ENCODE measurements at regions of chr1 and their contacts with region 1.

Region 1: GRCh38 chr1:164456272-164456671 is 102.7 kb upstream of the PBX1 start:
- DNase-seq: no peak
- ATAC-seq: no peak
- H3K4me3 ChIP-seq: no peak overlapping the region
- H3K27ac ChIP-seq: no peak overlapping the region
- H3K4me1 ChIP-seq: no peaks in the 10 kb centered on the region
- H3K27me3 ChIP-seq: no peaks in the 10 kb centered on the region
- CTCF ChIP-seq: no peak
- POLR2A ChIP-seq: no peak
- RAD21 ChIP-seq: no peak

Region 2: GRCh38 chr1:163570071-163570470 is 886.2 kb before region 1 on chr1:
- CTCF ChIA-PET with region 1: no interaction called
- POLR2A ChIA-PET with region 1: no interaction called
- dilution Hi-C with region 1: no loop called
- in situ Hi-C with region 1: no loop called
- intact Hi-C with region 1: no loop called
- DNase-seq: no peak
- ATAC-seq: no peak
- H3K4me3 ChIP-seq: no peak overlapping the region
- H3K27ac ChIP-seq: no peak overlapping the region
- H3K4me1 ChIP-seq: no peaks in the 10 kb centered on the region
- H3K27me3 ChIP-seq: no peaks in the 10 kb centered on the region
- CTCF ChIP-seq: no peak
- POLR2A ChIP-seq: no peak
- RAD21 ChIP-seq: no peak

Region 3: GRCh38 chr1:164518692-164519332 is 62.5 kb after region 1 on chr1:
- CTCF ChIA-PET with region 1: no interaction called
- POLR2A ChIA-PET with region 1: interaction called, 17 read pairs
- dilution Hi-C with region 1: no loop called
- in situ Hi-C with region 1: no loop called
- intact Hi-C with region 1: no loop called
- DNase-seq: no peak
- ATAC-seq: no peak
- H3K4me3 ChIP-seq: no peak overlapping the region
- H3K27ac ChIP-seq: no peak overlapping the region
- H3K4me1 ChIP-seq: no peaks in the 10 kb centered on the region
- H3K27me3 ChIP-seq: peaks cover 5% of the 10 kb centered on the region
- CTCF ChIP-seq: no peak
- POLR2A ChIP-seq: no peak
- RAD21 ChIP-seq: no peak